ACHN (cell line): ENCODE measurements at regions of chr2 and their contacts with region 1.

Region 1: GRCh38 chr2:104434318-104434797 is 419.6 kb upstream of the POU3F3 start:
- DNase-seq: no peak

Region 2: GRCh38 chr2:103887625-103888024 is 546.7 kb before region 1 on chr2:
- in situ Hi-C with region 1: no loop called
- DNase-seq: no peak

Region 3: GRCh38 chr2:104033399-104033798 is 401.0 kb before region 1 on chr2:
- in situ Hi-C with region 1: loop called (anchors 25 kb)
- DNase-seq: peak; percentile 61

Region 4: GRCh38 chr2:104716052-104716451 is 281.7 kb after region 1 on chr2:
- in situ Hi-C with region 1: no loop called
- DNase-seq: no peak